Naive thymus-derived CD4-positive, alpha-beta T cell (primary cell): ENCODE measurements at regions of chr17 and their contacts with region 1.

Region 1: DNA sequence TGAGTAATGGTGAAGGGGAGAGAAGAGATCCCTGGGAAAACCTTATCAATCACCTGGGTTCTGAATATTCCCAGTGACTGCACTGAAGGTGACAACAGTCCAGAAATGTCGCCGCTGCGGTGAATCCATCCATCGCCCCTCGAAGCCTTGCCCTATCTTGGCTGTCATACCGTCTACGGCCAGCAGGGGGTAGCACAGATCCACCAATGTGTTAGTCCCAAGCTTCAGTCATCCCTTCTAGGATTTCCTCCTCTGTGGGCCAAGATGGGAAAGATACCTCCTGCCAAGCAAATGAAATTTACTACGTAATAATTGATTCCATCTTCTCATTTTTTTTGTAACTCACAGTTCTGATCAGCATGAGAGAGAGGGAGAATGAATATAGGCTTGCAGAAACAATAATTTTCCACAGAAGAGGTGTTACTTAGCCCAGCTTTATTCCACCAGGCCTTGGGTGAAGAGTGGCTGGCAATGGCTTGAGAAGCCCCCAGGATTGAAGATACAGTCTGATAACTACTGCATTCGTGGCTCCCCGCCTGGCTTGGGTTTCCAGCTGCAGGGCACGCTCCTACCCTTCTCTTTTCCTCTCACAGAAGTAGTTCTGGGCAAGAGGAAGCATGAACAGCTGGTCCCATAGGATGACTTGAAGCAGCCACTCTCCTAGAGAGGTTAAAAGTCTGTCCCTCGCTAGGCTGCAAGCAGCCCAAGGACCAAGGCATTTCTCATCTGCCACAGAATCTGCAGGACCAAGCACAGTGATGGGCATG is 2.6 kb upstream of the FMNL1 start:
- DNase-seq: peak; percentile 74 to 89 (median 81)
- ATAC-seq: peak; percentile 74
- H3K4me3 ChIP-seq: peak overlapping the region; percentile 72
- H3K4me3 Mint-ChIP-seq: peak overlapping the region; percentile 81 to 99 (median 90)
- H3K27ac ChIP-seq: peak overlapping the region; percentile 96
- H3K27ac Mint-ChIP-seq: peak overlapping the region; percentile 37 to 94 (median 87)
- H3K4me1 ChIP-seq: peaks cover 24 to 30% of the 10 kb centered on the region in 2 donors
- H3K4me1 Mint-ChIP-seq: peaks cover 29 to 52% (median 37%) of the 10 kb centered on the region in 7 donors
- H3K27me3 ChIP-seq: no peaks in the 10 kb centered on the region
- H3K27me3 Mint-ChIP-seq: no peaks in the 10 kb centered on the region

Region 2: GRCh38 chr17:45172454-45173286 is 46.4 kb before region 1 on chr17:
- CTCF ChIA-PET with region 1: no interaction called
- POLR2A ChIA-PET with region 1: interaction called, 5 read pairs
- intact Hi-C with region 1: loop called in 1 of 2 experiments (anchors 2 kb)
- DNase-seq: peak in 8 of 9 donors; percentile 45 to 61 (median 55)
- ATAC-seq: peak; percentile 79
- H3K4me3 ChIP-seq: peak overlapping the region; percentile 65
- H3K4me3 Mint-ChIP-seq: peak overlapping the region; percentile 71 to 95 (median 86)
- H3K27ac ChIP-seq: peak overlapping the region; percentile 63
- H3K27ac Mint-ChIP-seq: peak overlapping the region; percentile 63 to 98 (median 94)
- H3K4me1 ChIP-seq: peaks cover 7 to 14% of the 10 kb centered on the region in 2 donors
- H3K4me1 Mint-ChIP-seq: peaks cover 8 to 31% (median 24%) of the 10 kb centered on the region in 7 donors
- H3K27me3 ChIP-seq: no peaks in the 10 kb centered on the region
- H3K27me3 Mint-ChIP-seq: no peaks in the 10 kb centered on the region

Region 3: GRCh38 chr17:45256114-45256966 is 37.3 kb after region 1 on chr17:
- CTCF ChIA-PET with region 1: interaction called, 15 read pairs
- POLR2A ChIA-PET with region 1: interaction called, 851 read pairs
- intact Hi-C with region 1: no loop called
- DNase-seq: peak in 1 of 9 donors; percentile 27
- ATAC-seq: peak; percentile 65
- H3K4me3 ChIP-seq: no peak overlapping the region
- H3K4me3 Mint-ChIP-seq: peak overlapping the region; percentile 12 to 82 (median 62)
- H3K27ac ChIP-seq: peak overlapping the region; percentile 44
- H3K27ac Mint-ChIP-seq: peak overlapping the region in 8 of 9 donors; percentile 25 to 89 (median 72)
- H3K4me1 ChIP-seq: peaks cover 3 to 34% of the 10 kb centered on the region in 2 donors
- H3K4me1 Mint-ChIP-seq: peaks cover 44 to 92% (median 81%) of the 10 kb centered on the region in 7 donors
- H3K27me3 ChIP-seq: no peaks in the 10 kb centered on the region
- H3K27me3 Mint-ChIP-seq: no peaks in the 10 kb centered on the region

Region 4: GRCh38 chr17:45270828-45271418 is 51.8 kb after region 1 on chr17:
- CTCF ChIA-PET with region 1: interaction called, 111 read pairs
- POLR2A ChIA-PET with region 1: interaction called, 8 read pairs
- intact Hi-C with region 1: loop called (anchors 1 kb)
- DNase-seq: peak; percentile 38 to 71 (median 55)
- ATAC-seq: peak; percentile 85
- H3K4me3 ChIP-seq: no peak overlapping the region
- H3K4me3 Mint-ChIP-seq: no peak overlapping the region
- H3K27ac ChIP-seq: no peak overlapping the region
- H3K27ac Mint-ChIP-seq: peak overlapping the region in 3 of 9 donors; percentile 6 to 32 (median 31)
- H3K4me1 ChIP-seq: no peaks in the 10 kb centered on the region
- H3K4me1 Mint-ChIP-seq: peaks cover 0 to 12% (median 0%) of the 10 kb centered on the region in 7 donors
- H3K27me3 ChIP-seq: no peaks in the 10 kb centered on the region
- H3K27me3 Mint-ChIP-seq: no peaks in the 10 kb centered on the region

Region 5: DNA sequence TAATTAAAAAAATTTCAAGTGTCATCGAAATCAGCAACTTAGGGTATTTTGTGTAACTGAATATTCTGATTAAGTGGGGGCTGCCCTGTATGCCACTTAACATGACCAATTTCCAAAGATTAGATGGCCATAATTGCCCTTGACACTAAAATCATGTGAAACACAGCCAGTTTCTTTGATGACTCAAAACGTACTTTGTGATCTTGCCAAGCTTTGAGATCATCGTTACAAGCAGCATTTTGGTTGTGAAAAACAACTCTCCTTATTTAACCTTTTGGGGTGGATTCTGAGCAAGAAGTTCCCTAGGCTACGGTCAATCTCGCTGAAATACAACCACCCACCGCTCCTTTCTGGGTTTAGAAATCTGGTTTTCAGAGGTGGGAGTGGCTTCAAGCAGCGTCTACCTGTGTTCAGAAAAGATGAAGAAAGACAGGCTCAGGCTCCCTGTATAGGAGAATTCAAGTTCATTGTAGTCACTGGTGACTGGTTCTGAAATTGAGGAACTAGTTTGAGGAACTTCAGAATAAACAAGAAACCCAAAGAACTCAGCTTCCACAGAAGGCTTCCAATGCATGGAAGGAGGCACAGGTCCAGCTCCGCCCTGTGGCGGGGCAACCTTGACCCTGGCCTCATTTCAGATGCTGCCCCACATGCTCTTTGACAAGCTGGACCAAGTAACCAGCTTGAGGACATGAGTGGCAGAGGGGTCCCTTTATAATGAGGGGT is 88.4 kb after region 1 on chr17:
- CTCF ChIA-PET with region 1: interaction called, 16 read pairs
- POLR2A ChIA-PET with region 1: interaction called, 35 read pairs
- intact Hi-C with region 1: no loop called
- DNase-seq: peak in 6 of 9 donors; percentile 27 to 57 (median 45)
- ATAC-seq: peak; percentile 75
- H3K4me3 ChIP-seq: peak overlapping the region; percentile 13
- H3K4me3 Mint-ChIP-seq: peak overlapping the region in 8 of 10 donors; percentile 15 to 74 (median 50)
- H3K27ac ChIP-seq: peak overlapping the region; percentile 48
- H3K27ac Mint-ChIP-seq: peak overlapping the region; percentile 71 to 93 (median 83)
- H3K4me1 ChIP-seq: peaks cover 31 to 51% of the 10 kb centered on the region in 2 donors
- H3K4me1 Mint-ChIP-seq: peaks cover 56 to 87% (median 80%) of the 10 kb centered on the region in 7 donors
- H3K27me3 ChIP-seq: no peaks in the 10 kb centered on the region
- H3K27me3 Mint-ChIP-seq: no peaks in the 10 kb centered on the region